B cell (primary cell): ENCODE measurements at regions of chr12 and their contacts with region 1.

Region 1: GRCh38 chr12:55659486-55660385 is 23.0 kb downstream of the OR10P1 start:
- DNase-seq: peak; percentile 57
- ATAC-seq: peak; percentile 56
- H3K4me3 ChIP-seq: no peak overlapping the region
- H3K4me3 Mint-ChIP-seq: no peak overlapping the region
- H3K27ac ChIP-seq: no peak overlapping the region
- H3K27ac Mint-ChIP-seq: no peak overlapping the region
- H3K4me1 ChIP-seq: no peaks in the 10 kb centered on the region
- H3K4me1 Mint-ChIP-seq: peaks cover 2% of the 10 kb centered on the region
- H3K27me3 ChIP-seq: no peaks in the 10 kb centered on the region
- H3K27me3 Mint-ChIP-seq: peaks cover 9% of the 10 kb centered on the region
- CTCF ChIP-seq: peak; percentile 54

Region 2: GRCh38 chr12:55619354-55620138 is 40.2 kb before region 1 on chr12:
- CTCF ChIA-PET with region 1: interaction called, 13 read pairs
- POLR2A ChIA-PET with region 1: no interaction called
- intact Hi-C with region 1: no loop called
- DNase-seq: peak; percentile 88
- ATAC-seq: peak; percentile 88
- H3K4me3 ChIP-seq: no peak overlapping the region
- H3K4me3 Mint-ChIP-seq: no peak overlapping the region
- H3K27ac ChIP-seq: no peak overlapping the region
- H3K27ac Mint-ChIP-seq: no peak overlapping the region
- H3K4me1 ChIP-seq: peaks cover 0 to 3% of the 10 kb centered on the region in 2 donors
- H3K4me1 Mint-ChIP-seq: no peaks in the 10 kb centered on the region
- H3K27me3 ChIP-seq: peaks cover 0 to 5% (median 2%) of the 10 kb centered on the region in 4 experiments
- H3K27me3 Mint-ChIP-seq: peaks cover 30% of the 10 kb centered on the region
- CTCF ChIP-seq: peak; percentile 93

Region 3: DNA sequence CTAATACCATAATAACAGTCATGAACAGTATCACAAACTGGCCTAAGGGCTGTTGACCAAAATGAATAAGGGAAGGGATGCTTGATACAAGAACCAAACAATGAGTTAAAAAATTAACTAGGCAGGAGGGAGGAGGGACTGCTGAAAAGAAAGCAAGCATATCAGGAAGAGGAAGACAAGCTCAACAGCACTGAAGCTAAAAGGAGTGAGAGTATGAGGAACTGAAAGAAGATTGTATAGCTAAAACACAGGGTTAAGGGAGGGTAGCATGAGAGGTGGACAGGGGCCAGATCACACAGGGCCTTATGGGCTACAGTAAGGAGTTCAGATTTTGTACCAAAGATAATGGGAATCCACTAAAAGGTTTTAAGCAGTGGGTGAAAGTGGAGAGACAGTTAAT is 13.9 kb after region 1 on chr12:
- CTCF ChIA-PET with region 1: interaction called, 17 read pairs
- POLR2A ChIA-PET with region 1: interaction called, 3 read pairs
- intact Hi-C with region 1: no loop called
- DNase-seq: peak; percentile 70
- ATAC-seq: peak; percentile 95
- H3K4me3 ChIP-seq: peak overlapping the region in 3 of 5 experiments; percentile 31 to 32 (median 32)
- H3K4me3 Mint-ChIP-seq: peak overlapping the region; percentile 69
- H3K27ac ChIP-seq: peak overlapping the region; percentile 71 to 72
- H3K27ac Mint-ChIP-seq: peak overlapping the region; percentile 92
- H3K4me1 ChIP-seq: peaks cover 24 to 25% of the 10 kb centered on the region in 2 donors
- H3K4me1 Mint-ChIP-seq: peaks cover 24% of the 10 kb centered on the region
- H3K27me3 ChIP-seq: no peaks in the 10 kb centered on the region
- H3K27me3 Mint-ChIP-seq: no peaks in the 10 kb centered on the region
- CTCF ChIP-seq: no peak

Region 4: DNA sequence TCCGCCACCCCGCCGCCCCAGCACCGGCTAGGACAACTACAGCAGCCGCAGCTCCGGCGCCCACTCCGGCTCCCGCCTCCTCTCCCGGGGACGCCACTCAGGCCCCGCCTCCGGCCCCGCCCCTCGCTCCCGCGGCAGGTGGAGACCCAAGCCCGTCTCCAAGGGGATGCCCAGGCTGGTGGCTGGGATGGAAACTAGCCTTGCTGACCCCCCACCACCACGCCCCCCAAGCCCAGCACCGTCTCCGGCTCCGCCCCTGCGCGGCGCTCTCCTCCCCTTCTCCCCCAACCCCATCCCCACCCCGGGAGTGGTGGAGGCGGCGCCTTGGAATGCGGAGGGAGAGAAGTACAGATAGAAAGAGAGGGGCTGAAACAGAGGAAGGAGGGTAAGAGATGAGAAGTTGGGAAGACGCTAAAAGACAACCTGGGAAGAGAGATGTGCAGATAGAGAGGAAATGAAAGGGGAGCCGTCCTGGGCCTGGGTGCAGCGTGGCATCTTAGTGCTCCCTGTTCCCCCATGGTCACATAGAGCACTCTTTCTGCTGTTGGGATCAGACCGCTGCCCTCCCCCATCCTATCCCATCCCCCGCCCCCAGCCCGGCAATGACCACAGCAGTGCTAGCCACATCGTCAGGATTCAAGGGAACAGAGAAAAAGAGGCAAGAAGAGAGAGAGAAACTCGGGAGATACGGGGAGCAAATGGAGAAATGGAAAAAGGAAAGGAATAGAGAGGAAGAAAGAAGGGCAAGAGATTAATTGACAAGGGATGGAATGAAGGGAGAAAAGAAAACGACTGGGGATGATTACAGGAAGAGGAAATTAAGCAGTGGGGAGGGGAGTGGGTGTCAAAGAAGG is 48.3 kb after region 1 on chr12 and contains the start of gene ITGA7:
- CTCF ChIA-PET with region 1: interaction called, 16 read pairs
- POLR2A ChIA-PET with region 1: no interaction called
- intact Hi-C with region 1: no loop called
- DNase-seq: peak; percentile 56
- ATAC-seq: peak; percentile 84
- H3K4me3 ChIP-seq: peak within 1 kb of the TSS; percentile 38 to 81 (median 58)
- H3K4me3 Mint-ChIP-seq: peak within 1 kb of the TSS; percentile 90
- H3K27ac ChIP-seq: no peak within 1 kb of the TSS
- H3K27ac Mint-ChIP-seq: peak within 1 kb of the TSS; percentile 24
- H3K4me1 ChIP-seq: peaks cover 19 to 21% of the 10 kb centered on the region in 2 donors
- H3K4me1 Mint-ChIP-seq: peaks cover 28% of the 10 kb centered on the region
- H3K27me3 ChIP-seq: peaks cover 0 to 20% (median 8%) of the 10 kb centered on the region in 4 experiments
- H3K27me3 Mint-ChIP-seq: peaks cover 18% of the 10 kb centered on the region
- CTCF ChIP-seq: no peak
- total RNA-seq, gene ITGA7: 2.4 and 2.7 TPM in 2 replicates